ENCODE measurements at regions of chr17 and their contacts with region 1.

Region 1: GRCh38 chr17:48997083-48997826 is at the start of gene IGF2BP1:
- DNase-seq: peak; percentile 40
- ATAC-seq: peak; percentile 64
- H3K4me3 Mint-ChIP-seq: peak within 1 kb of the TSS; percentile 78
- H3K27ac Mint-ChIP-seq: peak within 1 kb of the TSS; percentile 61
- H3K4me1 Mint-ChIP-seq: peaks cover 33% of the 10 kb centered on the region
- H3K27me3 Mint-ChIP-seq: peaks cover 60% of the 10 kb centered on the region
- CTCF ChIP-seq: no peak
- total RNA-seq, gene IGF2BP1: 0.10 and 0.40 TPM in 2 replicates

Region 2: GRCh38 chr17:48295362-48296288 is 701.6 kb before region 1 on chr17:
- CTCF ChIA-PET with region 1: no interaction called
- POLR2A ChIA-PET with region 1: interaction called, 11 read pairs
- intact Hi-C with region 1: no loop called
- DNase-seq: no peak
- ATAC-seq: peak; percentile 77
- H3K4me3 Mint-ChIP-seq: peak overlapping the region; percentile 81
- H3K27ac Mint-ChIP-seq: peak overlapping the region; percentile 90
- H3K4me1 Mint-ChIP-seq: peaks cover 24% of the 10 kb centered on the region
- H3K27me3 Mint-ChIP-seq: no peaks in the 10 kb centered on the region
- CTCF ChIP-seq: no peak

Region 3: DNA sequence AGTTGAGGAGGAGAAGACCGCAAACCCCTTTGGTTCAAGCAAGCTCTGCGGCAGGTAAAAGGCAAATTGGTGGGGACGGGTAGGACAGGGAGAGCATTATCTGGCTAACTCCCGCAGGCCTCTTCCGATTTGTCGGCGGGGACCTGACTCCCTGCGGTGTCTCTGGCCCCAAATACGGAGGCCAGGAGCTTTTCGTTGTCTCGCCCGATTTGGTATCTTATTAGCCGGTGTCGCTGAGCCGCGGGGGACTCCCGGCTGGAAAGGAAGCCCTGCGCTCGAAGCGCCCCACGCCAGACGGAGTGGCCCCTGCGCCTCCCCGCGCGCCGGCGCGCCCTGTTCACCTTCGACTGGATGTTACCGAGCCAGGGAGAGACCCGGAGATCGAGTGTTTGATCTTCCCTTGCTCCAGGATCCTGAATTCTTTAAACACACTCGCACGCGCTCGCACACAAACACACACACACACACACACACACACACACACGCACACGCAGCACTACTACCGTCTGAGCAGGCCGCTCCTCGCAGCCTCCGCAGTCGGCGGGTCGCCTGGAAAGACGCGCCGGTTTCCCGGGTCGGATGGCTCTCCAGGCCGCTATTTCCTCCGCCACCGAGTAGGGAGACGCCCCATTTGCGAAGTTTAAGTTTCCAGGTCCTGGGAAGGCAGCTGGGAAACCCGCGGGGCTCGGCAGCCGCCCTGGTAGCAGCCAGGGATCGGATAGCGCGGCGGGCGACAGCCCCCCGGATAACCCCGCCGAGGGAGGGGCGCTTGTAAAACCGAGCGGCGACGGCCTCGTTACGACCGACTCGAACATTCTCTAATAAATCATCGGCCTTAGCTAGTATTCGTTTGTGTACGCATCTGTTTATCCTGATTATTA is 278.3 kb before region 1 on chr17:
- CTCF ChIA-PET with region 1: no interaction called
- POLR2A ChIA-PET with region 1: no interaction called
- intact Hi-C with region 1: loop called (anchors 5 kb)
- DNase-seq: peak; percentile 34
- ATAC-seq: no peak
- H3K4me3 Mint-ChIP-seq: peak overlapping the region; percentile 38
- H3K27ac Mint-ChIP-seq: peak overlapping the region; percentile 56
- H3K4me1 Mint-ChIP-seq: peaks cover 22% of the 10 kb centered on the region
- H3K27me3 Mint-ChIP-seq: peaks cover 70% of the 10 kb centered on the region
- CTCF ChIP-seq: no peak

Region 4: GRCh38 chr17:48944519-48945260 is 52.6 kb before region 1 on chr17 and contains the start of gene SNF8:
- CTCF ChIA-PET with region 1: no interaction called
- POLR2A ChIA-PET with region 1: interaction called, 9 read pairs
- intact Hi-C with region 1: loop called (anchors 10 kb)
- DNase-seq: peak; percentile 96
- ATAC-seq: peak; percentile 94
- H3K4me3 Mint-ChIP-seq: peak within 1 kb of the TSS; percentile 96
- H3K27ac Mint-ChIP-seq: peak within 1 kb of the TSS; percentile 90
- H3K4me1 Mint-ChIP-seq: peaks cover 16% of the 10 kb centered on the region
- H3K27me3 Mint-ChIP-seq: no peaks in the 10 kb centered on the region
- CTCF ChIP-seq: no peak
- total RNA-seq, gene SNF8: 129 and 130 TPM in 2 replicates

Region 5: DNA sequence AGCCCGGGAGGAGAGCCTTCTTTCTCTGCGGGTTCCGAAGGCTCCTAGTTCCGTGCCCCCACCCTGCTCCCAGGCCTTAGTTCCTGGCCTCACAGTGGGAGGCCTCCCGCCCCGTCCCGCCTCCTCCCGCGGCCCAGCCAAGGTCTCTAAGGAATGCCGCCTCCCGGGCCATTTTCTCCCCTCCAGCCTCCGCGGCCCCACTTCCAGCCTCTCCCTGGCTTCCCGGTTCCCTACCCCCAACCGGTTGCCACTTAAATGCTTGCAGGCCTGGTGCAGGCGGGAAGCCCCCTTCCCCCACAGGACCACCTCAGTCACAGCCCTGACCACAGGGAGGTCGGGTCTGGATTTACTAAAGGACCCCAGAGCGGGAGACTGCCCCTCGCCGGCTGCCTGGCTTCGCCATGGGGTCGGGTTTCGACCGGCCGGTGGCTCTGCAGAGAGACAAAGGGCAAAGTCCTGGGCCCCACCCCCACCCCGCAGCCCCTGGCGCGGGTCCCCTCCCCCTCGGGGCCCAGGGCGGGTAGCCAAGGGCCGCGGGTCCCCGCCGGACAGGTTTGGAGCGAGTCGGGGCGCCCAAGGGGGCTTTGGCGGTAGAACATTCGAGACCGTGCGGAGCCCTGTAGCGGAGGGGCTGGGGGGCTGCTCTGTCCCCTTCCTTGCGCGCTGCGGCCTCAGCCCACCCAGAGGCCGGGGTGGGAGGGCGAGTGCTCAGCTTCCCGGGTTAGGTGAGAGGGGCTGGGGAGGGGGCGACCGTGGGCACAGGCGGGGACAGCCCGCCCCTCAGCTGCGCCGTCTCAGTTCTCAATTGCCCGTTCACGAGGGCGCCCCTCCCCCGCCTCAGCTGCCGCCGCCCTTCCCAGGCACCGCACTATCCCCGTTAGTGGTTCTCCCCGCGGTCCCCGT is 16.3 kb after region 1 on chr17:
- CTCF ChIA-PET with region 1: interaction called, 3 read pairs
- POLR2A ChIA-PET with region 1: interaction called, 19 read pairs
- intact Hi-C with region 1: no loop called
- DNase-seq: no peak
- ATAC-seq: no peak
- H3K4me3 Mint-ChIP-seq: no peak overlapping the region
- H3K27ac Mint-ChIP-seq: no peak overlapping the region
- H3K4me1 Mint-ChIP-seq: no peaks in the 10 kb centered on the region
- H3K27me3 Mint-ChIP-seq: peaks cover 47% of the 10 kb centered on the region
- CTCF ChIP-seq: no peak

Measured in activated B cell treated with CpG ODN at 0.5 μM for 24 hours (primary cell).